ENCODE measurements at regions of chr15 and their contacts with region 1.

Region 1: DNA sequence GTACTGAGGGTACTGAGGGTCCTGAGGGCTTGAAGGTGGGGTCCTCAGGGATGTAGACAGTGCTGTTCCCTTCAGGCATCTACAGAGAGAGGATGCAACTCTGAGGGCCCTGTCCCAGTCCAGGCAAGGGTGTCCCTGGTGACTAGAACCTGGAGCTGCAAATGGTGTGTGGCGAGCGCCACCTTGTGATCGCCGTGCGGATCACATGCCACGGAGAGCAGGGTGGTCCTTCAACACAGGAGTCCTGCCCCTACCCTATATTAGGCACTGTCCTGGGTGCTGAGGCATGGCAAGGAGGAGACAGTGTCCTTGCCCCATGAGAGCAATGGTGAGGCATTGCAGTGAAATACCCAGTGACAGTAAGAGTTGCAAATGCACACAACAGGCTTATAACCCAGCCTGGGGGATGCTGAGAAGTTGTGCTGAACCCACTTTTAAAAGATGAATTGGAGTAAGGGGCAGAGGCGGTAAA is 23.6 kb downstream of the RHCG start:
- DNase-seq: peak; percentile 91
- H3K4me3 ChIP-seq: no peak overlapping the region; a peak in 1 of 4 replicates
- H3K27ac ChIP-seq: no peak overlapping the region
- H3K4me1 ChIP-seq: peaks cover 2 to 5% of the 10 kb centered on the region in 2 experiments; a peak in 2 of 4 replicates
- H3K27me3 ChIP-seq: no peaks in the 10 kb centered on the region
- CTCF ChIP-seq: peak; percentile 85
- EP300 ChIP-seq: no peak
- RAD21 ChIP-seq: peak; percentile 96

Region 2: DNA sequence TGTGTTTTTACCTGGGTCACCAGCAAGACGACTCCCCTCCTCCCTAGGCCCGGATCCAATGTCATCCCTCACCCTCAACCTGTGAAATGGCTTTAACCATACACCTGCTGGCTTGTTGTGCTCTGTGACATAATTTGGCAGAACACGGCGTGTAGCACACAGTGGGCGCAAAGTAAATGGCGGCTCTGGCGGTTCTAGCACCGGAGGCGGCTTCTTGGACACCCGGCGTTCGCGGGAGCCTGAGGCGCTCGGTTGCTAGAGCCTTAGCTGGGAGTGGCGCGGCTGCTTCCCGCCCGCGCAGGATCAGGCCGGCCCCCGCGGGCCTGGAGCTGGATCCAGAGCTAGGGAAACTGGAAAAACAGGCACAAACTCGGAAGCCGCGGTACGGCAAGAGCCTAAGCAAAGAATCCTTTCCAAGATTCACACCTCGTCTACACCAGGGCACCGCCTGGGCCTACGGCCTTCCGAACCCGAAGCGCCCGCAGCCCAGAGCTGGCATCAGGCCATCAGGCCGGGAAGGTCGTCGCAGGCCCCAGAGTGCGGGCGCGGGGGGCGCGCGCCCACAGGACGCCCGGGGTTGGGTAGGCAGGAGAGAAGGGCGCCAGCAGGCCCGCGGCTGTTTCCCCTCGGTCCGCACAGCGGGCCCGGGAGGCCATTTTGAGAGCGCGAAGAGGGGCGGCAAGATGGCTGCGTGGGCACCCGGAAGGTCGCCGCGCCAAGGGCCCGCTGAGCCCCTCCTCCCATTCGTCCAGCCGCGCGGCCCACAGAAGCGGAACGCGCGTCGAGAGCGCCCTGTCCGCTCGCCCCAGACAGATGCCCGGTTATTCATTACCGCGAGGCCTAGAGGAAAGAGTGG is 94.3 kb before region 1 on chr15:
- CTCF ChIA-PET with region 1: no interaction called
- POLR2A ChIA-PET with region 1: no interaction called
- DNase-seq: no peak
- H3K4me3 ChIP-seq: no peak overlapping the region
- H3K27ac ChIP-seq: no peak overlapping the region
- H3K4me1 ChIP-seq: peaks cover 2 to 39% of the 10 kb centered on the region in 2 experiments
- H3K27me3 ChIP-seq: no peaks in the 10 kb centered on the region
- CTCF ChIP-seq: no peak
- EP300 ChIP-seq: no peak
- RAD21 ChIP-seq: no peak

Region 3: DNA sequence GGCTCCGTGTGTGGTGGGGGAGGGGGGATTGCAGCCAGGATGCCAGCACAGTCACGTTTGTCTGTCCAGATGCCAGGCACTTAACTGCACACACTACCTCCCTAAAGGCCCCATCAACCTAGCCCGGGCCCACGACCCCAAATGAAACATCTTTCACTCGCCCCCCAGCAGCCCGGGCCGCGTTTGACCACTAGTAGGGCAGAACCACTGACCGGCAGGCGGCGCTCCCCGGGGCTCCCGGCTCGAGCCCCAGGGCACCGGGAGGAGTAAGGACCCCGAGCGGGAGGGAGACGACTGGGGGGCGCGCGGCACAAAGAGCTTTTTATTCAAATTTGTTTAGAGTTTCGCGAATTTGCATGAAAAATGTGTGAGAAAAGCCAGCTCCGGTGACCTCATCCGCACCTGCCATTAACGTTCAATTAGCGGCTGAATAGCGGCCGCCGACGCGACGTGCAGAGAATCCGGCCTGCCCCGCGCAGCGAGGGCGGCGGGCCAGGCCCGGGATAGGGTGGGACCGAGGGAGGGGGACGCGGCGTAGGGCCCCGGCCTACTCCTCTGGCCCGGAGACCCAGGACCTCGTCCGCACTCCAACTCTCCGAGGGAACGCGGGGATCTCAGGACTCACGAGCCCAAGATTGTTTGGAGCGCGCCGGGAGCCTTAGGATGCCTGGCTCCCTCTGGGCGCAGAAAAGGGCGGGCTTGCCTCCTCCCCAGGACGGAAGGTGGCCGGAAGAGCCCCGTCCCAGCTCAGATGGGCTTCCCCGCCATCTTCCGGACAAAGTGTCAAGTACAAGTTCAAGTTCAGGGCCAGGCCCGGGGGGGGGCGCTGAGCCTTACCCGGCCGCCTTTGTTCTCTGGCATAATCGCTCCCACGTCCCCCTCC is 73.3 kb before region 1 on chr15:
- CTCF ChIA-PET with region 1: interaction called, 21 read pairs
- POLR2A ChIA-PET with region 1: no interaction called
- DNase-seq: peak; percentile 92
- H3K4me3 ChIP-seq: peak overlapping the region; percentile 70 to 72
- H3K27ac ChIP-seq: peak overlapping the region; percentile 59 to 94
- H3K4me1 ChIP-seq: peaks cover 0 to 22% of the 10 kb centered on the region in 2 experiments; a peak in 2 of 4 replicates
- H3K27me3 ChIP-seq: no peaks in the 10 kb centered on the region
- CTCF ChIP-seq: peak; percentile 72
- EP300 ChIP-seq: no peak
- RAD21 ChIP-seq: peak; percentile 69

Region 4: GRCh38 chr15:89430530-89431341 is 42.1 kb before region 1 on chr15:
- CTCF ChIA-PET with region 1: interaction called, 25 read pairs
- POLR2A ChIA-PET with region 1: no interaction called
- DNase-seq: peak; percentile 94
- H3K4me3 ChIP-seq: peak overlapping the region in 1 of 2 experiments; percentile 40; a peak in 1 of 4 replicates
- H3K27ac ChIP-seq: no peak overlapping the region
- H3K4me1 ChIP-seq: peaks cover 6 to 8% of the 10 kb centered on the region in 2 experiments; a peak in 3 of 4 replicates
- H3K27me3 ChIP-seq: no peaks in the 10 kb centered on the region
- CTCF ChIP-seq: peak; percentile 86
- EP300 ChIP-seq: no peak
- RAD21 ChIP-seq: peak; percentile 87

Region 5: DNA sequence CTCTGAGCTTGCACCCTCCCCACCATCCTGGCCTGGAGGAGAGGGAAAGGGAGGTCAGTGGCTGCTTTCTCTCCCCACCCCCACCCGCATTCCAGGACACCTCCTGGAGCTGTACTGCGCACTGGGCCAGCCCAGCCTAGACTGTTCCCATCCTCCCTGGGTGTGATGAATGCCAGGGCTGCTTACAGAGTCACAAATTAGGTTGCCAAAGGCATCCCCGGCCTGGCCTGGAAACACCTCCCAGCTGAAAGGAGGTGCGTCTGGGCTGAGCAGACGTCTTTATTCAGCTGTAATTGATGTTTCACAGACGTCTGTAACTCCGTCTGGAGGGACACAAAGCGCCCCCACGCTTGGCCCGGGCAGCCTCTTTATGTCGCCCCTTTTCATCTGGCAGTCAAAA is 24.0 kb before region 1 on chr15:
- CTCF ChIA-PET with region 1: interaction called, 309 read pairs
- POLR2A ChIA-PET with region 1: no interaction called
- DNase-seq: peak; percentile 90
- H3K4me3 ChIP-seq: no peak overlapping the region
- H3K27ac ChIP-seq: peak overlapping the region in 1 of 2 experiments; percentile 86; a peak in 2 of 4 replicates
- H3K4me1 ChIP-seq: peaks cover 9 to 72% of the 10 kb centered on the region in 2 experiments; a peak in 3 of 4 replicates
- H3K27me3 ChIP-seq: no peaks in the 10 kb centered on the region
- CTCF ChIP-seq: no peak
- EP300 ChIP-seq: peak in 1 of 2 experiments; percentile 89; a peak in 2 of 4 replicates
- RAD21 ChIP-seq: no peak

Region 6: GRCh38 chr15:89496155-89497098 is 23.6 kb after region 1 on chr15 and contains the start of gene RHCG:
- CTCF ChIA-PET with region 1: interaction called, 10 read pairs
- POLR2A ChIA-PET with region 1: no interaction called
- DNase-seq: peak; percentile 61
- H3K4me3 ChIP-seq: peak within 1 kb of the TSS; percentile 14 to 46; a peak in 2 of 4 replicates
- H3K27ac ChIP-seq: no peak within 1 kb of the TSS
- H3K4me1 ChIP-seq: peaks cover 0 to 8% of the 10 kb centered on the region in 2 experiments; a peak in 1 of 4 replicates
- H3K27me3 ChIP-seq: no peaks in the 10 kb centered on the region
- CTCF ChIP-seq: peak; percentile 15; the same call in 1 of the 2 replicates
- EP300 ChIP-seq: no peak
- RAD21 ChIP-seq: no peak
- polyA plus RNA-seq, gene RHCG: not detected in 2 replicates

Region 7: DNA sequence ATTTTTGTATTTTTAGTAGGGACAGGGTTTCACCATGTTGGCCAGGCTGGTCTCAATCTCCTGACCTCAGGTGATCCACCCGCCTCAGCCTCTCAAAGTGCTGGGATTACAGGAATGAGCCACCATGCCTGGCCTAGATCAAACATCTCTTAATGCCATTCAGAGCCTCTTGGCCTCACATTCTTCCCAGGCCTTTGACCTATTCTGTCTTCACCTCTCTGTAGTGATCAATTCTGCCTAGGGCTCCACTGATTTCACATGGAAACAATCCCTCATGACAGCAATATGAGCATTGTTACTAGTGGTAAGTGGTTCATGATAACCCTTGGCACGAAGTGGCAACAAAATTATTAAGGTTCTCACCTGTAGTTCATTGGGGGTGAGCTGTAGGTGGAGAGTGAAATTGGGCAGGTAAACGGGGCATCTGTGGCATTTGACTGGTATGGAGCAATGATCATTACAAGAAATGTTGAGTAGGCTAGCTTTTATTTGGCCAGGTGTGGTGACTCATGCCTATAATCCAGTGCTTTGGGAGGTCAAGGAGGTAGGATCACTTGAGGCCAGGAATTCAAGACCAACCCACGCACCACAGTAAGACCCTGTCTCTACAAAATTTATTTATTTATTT is 444.7 kb after region 1 on chr15:
- CTCF ChIA-PET with region 1: no interaction called
- POLR2A ChIA-PET with region 1: no interaction called
- DNase-seq: no peak
- H3K4me3 ChIP-seq: no peak overlapping the region
- H3K27ac ChIP-seq: no peak overlapping the region
- H3K4me1 ChIP-seq: peaks cover 0 to 5% of the 10 kb centered on the region in 2 experiments; a peak in 1 of 4 replicates
- H3K27me3 ChIP-seq: no peaks in the 10 kb centered on the region
- CTCF ChIP-seq: no peak
- EP300 ChIP-seq: no peak
- RAD21 ChIP-seq: no peak